ENCODE measurements at regions of chr1 and their contacts with region 1.

Region 1: GRCh38 chr1:25022361-25023189 is 92.5 kb upstream of the RUNX3 start:
- DNase-seq: peak; percentile 90 to 99 (median 94)
- H3K4me3 ChIP-seq: peak overlapping the region; percentile 14 to 20
- H3K4me3 Mint-ChIP-seq: peak overlapping the region; percentile 35 to 89 (median 70)
- H3K27ac ChIP-seq: peak overlapping the region; percentile 99
- H3K27ac Mint-ChIP-seq: peak overlapping the region; percentile 95 to 99 (median 97)
- H3K4me1 ChIP-seq: peaks cover 74% of the 10 kb centered on the region
- H3K4me1 Mint-ChIP-seq: peaks cover 27 to 76% (median 49%) of the 10 kb centered on the region in 4 donors
- H3K27me3 ChIP-seq: no peaks in the 10 kb centered on the region
- H3K27me3 Mint-ChIP-seq: no peaks in the 10 kb centered on the region

Region 2: GRCh38 chr1:24909388-24909898 is 113.1 kb before region 1 on chr1:
- CTCF ChIA-PET with region 1: no interaction called
- POLR2A ChIA-PET with region 1: interaction called, 12 read pairs
- intact Hi-C with region 1: no loop called
- DNase-seq: peak in 1 of 5 donors; percentile 37
- H3K4me3 ChIP-seq: no peak overlapping the region
- H3K4me3 Mint-ChIP-seq: peak overlapping the region in 2 of 8 donors; percentile 26 to 52
- H3K27ac ChIP-seq: peak overlapping the region; percentile 77
- H3K27ac Mint-ChIP-seq: peak overlapping the region; percentile 85 to 100 (median 95)
- H3K4me1 ChIP-seq: peaks cover 68% of the 10 kb centered on the region
- H3K4me1 Mint-ChIP-seq: peaks cover 35 to 72% (median 51%) of the 10 kb centered on the region in 4 donors
- H3K27me3 ChIP-seq: no peaks in the 10 kb centered on the region
- H3K27me3 Mint-ChIP-seq: no peaks in the 10 kb centered on the region

Region 3: DNA sequence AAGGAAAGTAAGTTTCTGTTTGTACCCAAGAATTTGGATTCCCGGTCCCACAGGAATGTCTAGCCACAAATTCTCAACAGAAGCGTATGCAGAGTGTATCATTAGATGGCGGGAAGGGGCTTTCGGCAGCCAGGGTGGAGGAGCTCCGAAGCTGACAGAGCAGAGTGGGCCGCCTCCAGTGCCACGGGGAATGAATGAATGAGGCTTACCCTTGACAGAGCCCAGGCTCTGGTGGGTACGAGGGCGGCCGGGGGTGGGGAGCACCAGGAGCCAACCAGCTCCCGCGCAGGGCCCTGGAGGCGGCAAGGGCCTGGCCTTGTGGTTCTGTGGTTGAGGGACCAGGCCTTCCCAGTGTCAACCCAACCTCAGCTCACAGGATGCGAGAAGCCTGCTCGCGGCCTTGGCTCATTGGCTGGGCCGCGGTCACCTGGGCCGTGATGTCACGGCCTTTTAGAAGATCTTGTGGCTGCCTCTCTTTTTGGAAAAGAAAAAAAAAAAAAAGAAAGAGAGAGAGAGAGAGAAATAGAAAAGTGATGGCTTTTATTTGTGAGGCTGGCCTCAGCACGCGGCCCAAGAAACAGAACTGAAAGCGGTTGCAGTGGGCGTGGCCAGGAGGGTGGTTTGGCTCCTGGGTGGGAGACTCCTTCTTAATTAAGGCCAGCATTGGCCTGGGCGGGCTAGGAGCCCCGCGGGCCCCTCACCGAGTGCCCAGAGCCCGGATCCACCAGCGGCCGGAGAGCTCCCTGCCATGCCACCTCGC is 57.6 kb before region 1 on chr1:
- CTCF ChIA-PET with region 1: interaction called, 11 read pairs
- POLR2A ChIA-PET with region 1: interaction called, 98 read pairs
- intact Hi-C with region 1: loop called (anchors 1 kb)
- DNase-seq: peak; percentile 90 to 95 (median 93)
- H3K4me3 ChIP-seq: peak overlapping the region; percentile 46 to 69
- H3K4me3 Mint-ChIP-seq: peak overlapping the region; percentile 69 to 91 (median 84)
- H3K27ac ChIP-seq: peak overlapping the region; percentile 69
- H3K27ac Mint-ChIP-seq: peak overlapping the region; percentile 89 to 100 (median 96)
- H3K4me1 ChIP-seq: peaks cover 45% of the 10 kb centered on the region
- H3K4me1 Mint-ChIP-seq: peaks cover 16 to 73% (median 39%) of the 10 kb centered on the region in 4 donors
- H3K27me3 ChIP-seq: no peaks in the 10 kb centered on the region
- H3K27me3 Mint-ChIP-seq: peaks cover 0 to 2% of the 10 kb centered on the region in 2 donors

Region 4: GRCh38 chr1:24987875-24988557 is 34.6 kb before region 1 on chr1:
- CTCF ChIA-PET with region 1: interaction called, 11 read pairs
- POLR2A ChIA-PET with region 1: interaction called, 88 read pairs
- intact Hi-C with region 1: loop called (anchors 2 kb)
- DNase-seq: no peak
- H3K4me3 ChIP-seq: no peak overlapping the region
- H3K4me3 Mint-ChIP-seq: peak overlapping the region in 1 of 8 donors; percentile 36
- H3K27ac ChIP-seq: no peak overlapping the region
- H3K27ac Mint-ChIP-seq: peak overlapping the region in 4 of 7 donors; percentile 31 to 89 (median 60)
- H3K4me1 ChIP-seq: peaks cover 90% of the 10 kb centered on the region
- H3K4me1 Mint-ChIP-seq: peaks cover 65 to 91% (median 77%) of the 10 kb centered on the region in 4 donors
- H3K27me3 ChIP-seq: no peaks in the 10 kb centered on the region
- H3K27me3 Mint-ChIP-seq: peaks cover 0 to 2% of the 10 kb centered on the region in 2 donors

Region 5: GRCh38 chr1:25006770-25007169 is 15.8 kb before region 1 on chr1:
- CTCF ChIA-PET with region 1: interaction called, 4 read pairs
- POLR2A ChIA-PET with region 1: interaction called, 15 read pairs
- intact Hi-C with region 1: no loop called
- DNase-seq: no peak
- H3K4me3 ChIP-seq: no peak overlapping the region
- H3K4me3 Mint-ChIP-seq: peak overlapping the region in 1 of 8 donors; percentile 22
- H3K27ac ChIP-seq: no peak overlapping the region
- H3K27ac Mint-ChIP-seq: peak overlapping the region in 3 of 7 donors; percentile 3 to 84 (median 79)
- H3K4me1 ChIP-seq: peaks cover 20% of the 10 kb centered on the region
- H3K4me1 Mint-ChIP-seq: peaks cover 16 to 38% (median 28%) of the 10 kb centered on the region in 4 donors
- H3K27me3 ChIP-seq: no peaks in the 10 kb centered on the region
- H3K27me3 Mint-ChIP-seq: no peaks in the 10 kb centered on the region

Region 6: DNA sequence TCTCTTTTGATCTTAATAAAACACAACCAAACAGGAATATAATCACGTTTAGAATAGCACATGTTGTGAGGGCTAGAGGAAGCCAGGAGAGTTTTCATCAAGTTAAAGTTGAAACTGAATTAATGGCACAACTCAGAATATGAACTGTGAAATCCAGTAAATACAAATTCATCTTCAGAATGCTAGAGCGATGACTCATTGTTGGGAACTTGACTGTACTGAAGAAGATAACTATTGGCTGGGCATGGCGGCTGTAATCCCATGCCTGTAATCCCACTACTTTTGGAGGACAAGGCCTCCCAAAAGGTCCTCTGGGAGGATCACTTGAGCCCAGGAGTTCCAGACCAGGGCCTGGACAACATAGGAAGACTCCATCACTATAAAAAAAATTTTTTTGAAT is 200.9 kb after region 1 on chr1:
- CTCF ChIA-PET with region 1: no interaction called
- POLR2A ChIA-PET with region 1: no interaction called
- intact Hi-C with region 1: no loop called
- DNase-seq: no peak
- H3K4me3 ChIP-seq: no peak overlapping the region
- H3K4me3 Mint-ChIP-seq: no peak overlapping the region
- H3K27ac ChIP-seq: no peak overlapping the region
- H3K27ac Mint-ChIP-seq: peak overlapping the region in 2 of 7 donors; percentile 6 to 23
- H3K4me1 ChIP-seq: no peaks in the 10 kb centered on the region
- H3K4me1 Mint-ChIP-seq: peaks cover 0 to 6% (median 0%) of the 10 kb centered on the region in 4 donors
- H3K27me3 ChIP-seq: no peaks in the 10 kb centered on the region
- H3K27me3 Mint-ChIP-seq: no peaks in the 10 kb centered on the region

Region 7: DNA sequence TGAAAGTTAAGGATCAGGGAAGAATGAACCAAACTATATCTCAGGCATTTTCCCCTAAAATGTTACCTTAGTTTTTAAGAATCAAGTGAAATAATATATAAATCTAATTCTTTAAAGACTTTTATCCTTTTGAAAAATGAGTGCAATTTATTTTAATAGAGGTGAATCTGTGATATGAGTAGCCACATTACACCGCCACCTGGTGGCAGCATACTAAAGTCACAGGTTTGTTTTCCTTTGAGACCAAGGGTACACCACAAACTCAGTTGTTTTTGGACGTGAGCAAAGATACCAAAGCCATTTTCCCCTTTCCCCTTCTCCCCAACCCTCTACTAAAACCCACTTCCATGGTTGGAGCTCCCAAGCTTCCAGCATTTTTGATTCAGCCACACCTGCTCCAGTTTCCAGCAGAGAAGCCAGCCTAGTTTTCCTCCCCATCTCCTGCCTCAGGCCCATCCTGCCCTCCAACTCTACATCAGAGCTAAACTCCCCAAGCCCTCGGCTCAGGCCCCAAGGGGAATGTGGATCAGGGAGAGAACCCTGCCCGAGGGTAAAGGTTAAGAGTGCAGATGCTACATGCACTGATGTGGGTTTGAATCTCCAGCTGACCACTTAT is 498.0 kb after region 1 on chr1:
- CTCF ChIA-PET with region 1: no interaction called
- POLR2A ChIA-PET with region 1: no interaction called
- intact Hi-C with region 1: no loop called
- DNase-seq: peak; percentile 61 to 66 (median 62)
- H3K4me3 ChIP-seq: no peak overlapping the region
- H3K4me3 Mint-ChIP-seq: no peak overlapping the region
- H3K27ac ChIP-seq: no peak overlapping the region
- H3K27ac Mint-ChIP-seq: peak overlapping the region in 5 of 7 donors; percentile 68 to 84 (median 78)
- H3K4me1 ChIP-seq: peaks cover 5% of the 10 kb centered on the region
- H3K4me1 Mint-ChIP-seq: peaks cover 6 to 10% (median 8%) of the 10 kb centered on the region in 4 donors
- H3K27me3 ChIP-seq: no peaks in the 10 kb centered on the region
- H3K27me3 Mint-ChIP-seq: peaks cover 0 to 2% of the 10 kb centered on the region in 2 donors

Measured in CD4-positive, alpha-beta memory T cell (primary cell).